ENCODE measurements at regions of chr17 and their contacts with region 1.

Region 1: GRCh38 chr17:76868176-76868668 is at the start of gene MGAT5B:
- DNase-seq: peak; percentile 53
- ATAC-seq: peak; percentile 92
- H3K4me3 ChIP-seq: peak within 1 kb of the TSS in 1 of 3 experiments; percentile 54; a peak in 1 of 6 replicates
- H3K27ac ChIP-seq: no peak within 1 kb of the TSS
- H3K4me1 ChIP-seq: peaks cover 6% of the 10 kb centered on the region; the same call in 1 of the 2 replicates
- H3K27me3 ChIP-seq: peaks cover 30 to 75% of the 10 kb centered on the region in 2 experiments
- CTCF ChIP-seq: peak; percentile 77
- EP300 ChIP-seq: no peak
- POLR2A ChIP-seq: no peak
- RAD21 ChIP-seq: peak; percentile 100
- total RNA-seq, gene MGAT5B: 0.07 and 0.13 TPM in 2 replicates

Region 2: GRCh38 chr17:76820039-76820438 is 48.2 kb before region 1 on chr17:
- CTCF ChIA-PET with region 1: no interaction called
- POLR2A ChIA-PET with region 1: no interaction called
- in situ Hi-C with region 1: no loop called
- intact Hi-C with region 1: no loop called
- DNase-seq: no peak
- ATAC-seq: no peak; the same call in 2 of the 3 replicates
- H3K4me3 ChIP-seq: no peak overlapping the region
- H3K27ac ChIP-seq: no peak overlapping the region
- H3K4me1 ChIP-seq: no peaks in the 10 kb centered on the region
- H3K27me3 ChIP-seq: peaks cover 7 to 42% of the 10 kb centered on the region in 2 experiments
- CTCF ChIP-seq: no peak
- EP300 ChIP-seq: no peak
- POLR2A ChIP-seq: no peak
- RAD21 ChIP-seq: no peak

Region 3: DNA sequence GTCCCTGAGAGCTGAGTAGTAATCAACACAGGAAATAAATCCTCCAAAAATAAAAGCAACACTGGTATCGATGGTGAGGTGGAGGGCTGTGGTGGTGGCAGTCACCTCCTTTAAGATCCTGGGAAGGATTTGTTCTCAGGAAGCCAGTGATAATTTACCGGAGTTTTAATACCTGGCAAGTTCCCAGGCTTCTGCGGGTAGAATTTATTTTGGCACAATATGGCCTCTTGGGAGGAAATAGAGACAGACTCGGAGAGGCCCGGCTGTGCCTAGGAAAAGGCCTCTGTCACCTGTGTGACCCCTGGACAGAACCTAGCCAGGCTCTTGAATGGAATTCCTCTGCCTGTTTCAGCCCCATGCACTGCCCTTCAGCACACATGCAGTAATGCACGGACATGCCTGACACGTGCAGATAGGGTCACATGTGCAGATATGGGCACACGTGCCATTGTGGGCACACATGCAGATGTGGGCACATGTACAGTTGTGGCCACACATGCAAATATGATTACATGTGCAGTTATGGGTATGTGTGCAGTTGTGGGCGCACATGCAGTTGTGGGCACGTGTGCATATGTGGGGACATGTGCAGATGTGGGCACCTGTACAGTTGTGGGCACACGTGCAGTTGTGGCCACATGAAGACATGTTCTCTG is 33.4 kb after region 1 on chr17:
- CTCF ChIA-PET with region 1: no interaction called
- POLR2A ChIA-PET with region 1: no interaction called
- in situ Hi-C with region 1: no loop called
- intact Hi-C with region 1: no loop called
- DNase-seq: no peak
- ATAC-seq: no peak
- H3K4me3 ChIP-seq: no peak overlapping the region
- H3K27ac ChIP-seq: no peak overlapping the region
- H3K4me1 ChIP-seq: no peaks in the 10 kb centered on the region
- H3K27me3 ChIP-seq: peaks cover 33 to 88% of the 10 kb centered on the region in 2 experiments
- CTCF ChIP-seq: no peak
- EP300 ChIP-seq: no peak
- POLR2A ChIP-seq: no peak
- RAD21 ChIP-seq: no peak

Region 4: DNA sequence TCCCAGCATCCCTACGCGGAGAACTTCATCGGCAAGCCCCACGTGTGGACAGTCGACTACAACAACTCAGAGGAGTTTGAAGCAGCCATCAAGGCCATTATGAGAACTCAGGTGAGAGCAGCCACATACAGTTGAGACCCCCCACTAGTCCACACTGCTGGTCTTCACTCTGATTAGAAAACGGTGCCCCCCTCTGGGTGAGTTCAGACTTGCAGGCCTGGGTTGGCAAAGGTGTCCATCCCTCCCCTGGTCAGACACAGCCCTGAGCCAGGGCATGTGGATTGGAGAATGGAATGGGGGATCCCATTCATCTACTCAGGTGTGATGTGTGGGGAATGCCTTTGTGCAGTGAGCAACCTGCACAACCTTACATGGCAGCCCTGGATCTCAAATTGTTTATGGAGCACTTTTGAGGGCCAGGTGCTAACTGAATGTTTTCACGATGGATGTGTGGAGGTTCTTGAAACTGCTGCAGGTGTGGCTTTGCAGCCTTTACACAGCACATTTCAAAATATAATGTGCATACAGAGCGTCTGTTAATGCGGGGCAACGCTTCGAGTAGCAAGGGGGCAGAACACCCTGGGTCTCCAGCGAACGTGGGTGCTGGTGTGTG is 72.6 kb after region 1 on chr17:
- CTCF ChIA-PET with region 1: no interaction called
- POLR2A ChIA-PET with region 1: no interaction called
- in situ Hi-C with region 1: no loop called
- intact Hi-C with region 1: loop called (anchors 1 kb)
- DNase-seq: peak; percentile 23
- ATAC-seq: peak; percentile 62
- H3K4me3 ChIP-seq: no peak overlapping the region
- H3K27ac ChIP-seq: no peak overlapping the region
- H3K4me1 ChIP-seq: peaks cover 9% of the 10 kb centered on the region
- H3K27me3 ChIP-seq: peaks cover 10 to 43% of the 10 kb centered on the region in 2 experiments
- CTCF ChIP-seq: peak; percentile 36
- EP300 ChIP-seq: no peak
- POLR2A ChIP-seq: no peak
- RAD21 ChIP-seq: no peak

Region 5: GRCh38 chr17:77054936-77055335 is 186.7 kb after region 1 on chr17:
- CTCF ChIA-PET with region 1: interaction called, 29 read pairs
- POLR2A ChIA-PET with region 1: interaction called, 4 read pairs
- in situ Hi-C with region 1: no loop called
- intact Hi-C with region 1: no loop called
- DNase-seq: no peak
- ATAC-seq: peak; percentile 71
- H3K4me3 ChIP-seq: no peak overlapping the region
- H3K27ac ChIP-seq: no peak overlapping the region
- H3K4me1 ChIP-seq: peaks cover 9% of the 10 kb centered on the region
- H3K27me3 ChIP-seq: peaks cover 29 to 82% of the 10 kb centered on the region in 2 experiments
- CTCF ChIP-seq: no peak
- EP300 ChIP-seq: no peak
- POLR2A ChIP-seq: no peak
- RAD21 ChIP-seq: no peak

Region 6: GRCh38 chr17:77061669-77062068 is 193.4 kb after region 1 on chr17:
- CTCF ChIA-PET with region 1: interaction called, 39 read pairs
- POLR2A ChIA-PET with region 1: interaction called, 4 read pairs
- in situ Hi-C with region 1: no loop called
- intact Hi-C with region 1: loop called (anchors 1 kb)
- DNase-seq: no peak
- ATAC-seq: no peak
- H3K4me3 ChIP-seq: no peak overlapping the region
- H3K27ac ChIP-seq: no peak overlapping the region
- H3K4me1 ChIP-seq: peaks cover 9% of the 10 kb centered on the region
- H3K27me3 ChIP-seq: peaks cover 3 to 42% of the 10 kb centered on the region in 2 experiments
- CTCF ChIP-seq: no peak
- EP300 ChIP-seq: no peak
- POLR2A ChIP-seq: no peak
- RAD21 ChIP-seq: no peak

Region 7: DNA sequence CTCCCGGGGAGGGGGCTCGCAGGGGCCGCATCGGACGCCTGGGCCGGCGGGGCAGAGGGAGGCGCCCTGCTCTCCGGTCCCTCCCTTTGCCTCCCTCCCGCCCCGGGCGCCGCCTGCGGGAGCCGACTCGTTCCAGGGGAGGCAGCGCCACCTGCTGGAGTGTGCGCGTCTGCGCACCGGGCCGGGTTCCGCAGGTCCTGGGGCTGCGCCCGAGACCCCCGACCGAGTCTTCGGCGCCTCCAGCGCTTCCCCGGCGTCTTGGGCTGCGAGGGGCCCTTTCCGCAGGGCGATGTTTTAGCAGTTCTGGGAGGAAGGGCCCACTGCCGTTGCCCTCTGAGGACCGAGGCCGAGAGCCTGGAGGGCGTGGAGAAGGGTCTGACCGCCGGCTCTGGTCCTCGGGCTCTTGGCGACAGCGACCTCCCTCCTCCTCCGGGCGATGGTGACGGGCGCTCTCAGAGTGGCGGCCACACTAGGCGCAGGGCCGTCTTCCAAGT is 378.9 kb after region 1 on chr17:
- CTCF ChIA-PET with region 1: interaction called, 3 read pairs
- POLR2A ChIA-PET with region 1: no interaction called
- in situ Hi-C with region 1: loop called (anchors 25 kb)
- intact Hi-C with region 1: no loop called
- DNase-seq: peak; percentile 67
- ATAC-seq: peak; percentile 93
- H3K4me3 ChIP-seq: peak overlapping the region; percentile 54 to 81 (median 59); a peak in 5 of 6 replicates
- H3K27ac ChIP-seq: no peak overlapping the region
- H3K4me1 ChIP-seq: peaks cover 19% of the 10 kb centered on the region
- H3K27me3 ChIP-seq: peaks cover 17 to 58% of the 10 kb centered on the region in 2 experiments
- CTCF ChIP-seq: peak; percentile 98
- EP300 ChIP-seq: no peak
- POLR2A ChIP-seq: no peak
- RAD21 ChIP-seq: peak; percentile 99

Measured in HepG2 (cell line).